A549 (cell line): ENCODE measurements at regions of chr5 and their contacts with region 1.

Region 1: DNA sequence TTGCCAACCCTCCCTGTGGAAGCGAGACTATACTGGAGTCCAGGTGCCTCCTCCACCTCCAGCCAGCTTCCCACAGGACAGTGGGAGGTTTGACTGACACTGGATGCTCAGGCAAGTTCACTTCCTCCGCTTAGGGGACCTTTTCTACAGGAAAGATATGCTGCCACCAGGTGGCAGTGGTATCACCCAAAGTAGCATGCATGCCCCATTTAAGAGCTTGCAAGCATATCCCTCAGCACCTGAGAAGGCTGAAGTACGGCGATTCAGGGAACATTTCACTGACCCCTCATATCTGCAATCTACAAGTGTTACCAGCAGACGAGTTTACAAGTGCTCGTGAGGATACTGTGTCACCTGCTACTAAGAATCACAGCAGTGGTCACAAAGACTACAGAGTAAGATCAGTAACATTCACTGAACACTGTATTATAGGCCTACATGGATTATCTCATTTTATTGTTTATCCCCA is 75.5 kb downstream of the KLHL3 start:
- DNase-seq: peak; percentile 65 to 84
- ATAC-seq: peak; percentile 99
- H3K4me3 ChIP-seq: no peak overlapping the region
- H3K27ac ChIP-seq: no peak overlapping the region
- H3K4me1 ChIP-seq: no peaks in the 10 kb centered on the region
- CTCF ChIP-seq: peak; percentile 86
- EP300 ChIP-seq: no peak
- POLR2A ChIP-seq: no peak
- RAD21 ChIP-seq: peak; percentile 69 to 74

Region 2: GRCh38 chr5:137594717-137595116 is 65.7 kb before region 1 on chr5:
- CTCF ChIA-PET with region 1: no interaction called
- POLR2A ChIA-PET with region 1: no interaction called
- DNase-seq: no peak
- ATAC-seq: no peak
- H3K4me3 ChIP-seq: no peak overlapping the region
- H3K27ac ChIP-seq: no peak overlapping the region
- H3K4me1 ChIP-seq: no peaks in the 10 kb centered on the region
- CTCF ChIP-seq: no peak
- EP300 ChIP-seq: no peak
- POLR2A ChIP-seq: no peak
- RAD21 ChIP-seq: no peak

Region 3: GRCh38 chr5:137629646-137630045 is 30.7 kb before region 1 on chr5:
- CTCF ChIA-PET with region 1: interaction called, 25 read pairs
- POLR2A ChIA-PET with region 1: no interaction called
- DNase-seq: peak; percentile 60 to 77
- ATAC-seq: peak; percentile 66 to 92
- H3K4me3 ChIP-seq: no peak overlapping the region
- H3K27ac ChIP-seq: no peak overlapping the region
- H3K4me1 ChIP-seq: no peaks in the 10 kb centered on the region
- CTCF ChIP-seq: peak; percentile 87
- EP300 ChIP-seq: no peak
- POLR2A ChIP-seq: no peak
- RAD21 ChIP-seq: peak; percentile 89 to 91

Region 4: GRCh38 chr5:137641148-137641547 is 19.2 kb before region 1 on chr5:
- CTCF ChIA-PET with region 1: interaction called, 17 read pairs
- POLR2A ChIA-PET with region 1: no interaction called
- DNase-seq: no peak
- ATAC-seq: no peak
- H3K4me3 ChIP-seq: no peak overlapping the region
- H3K27ac ChIP-seq: no peak overlapping the region
- H3K4me1 ChIP-seq: no peaks in the 10 kb centered on the region
- CTCF ChIP-seq: no peak
- EP300 ChIP-seq: no peak
- POLR2A ChIP-seq: no peak
- RAD21 ChIP-seq: no peak

Region 5: GRCh38 chr5:137672019-137672418 is 11.6 kb after region 1 on chr5:
- CTCF ChIA-PET with region 1: interaction called, 35 read pairs
- POLR2A ChIA-PET with region 1: no interaction called
- DNase-seq: no peak
- ATAC-seq: no peak
- H3K4me3 ChIP-seq: no peak overlapping the region
- H3K27ac ChIP-seq: no peak overlapping the region
- H3K4me1 ChIP-seq: peaks cover 6% of the 10 kb centered on the region; the same call in 1 of the 3 replicates
- CTCF ChIP-seq: no peak
- EP300 ChIP-seq: no peak
- POLR2A ChIP-seq: no peak
- RAD21 ChIP-seq: no peak

Region 6: GRCh38 chr5:137822158-137822764 is 161.9 kb after region 1 on chr5:
- CTCF ChIA-PET with region 1: interaction called, 15 read pairs
- POLR2A ChIA-PET with region 1: no interaction called
- DNase-seq: peak; percentile 69 to 73
- ATAC-seq: peak; percentile 92 to 95
- H3K4me3 ChIP-seq: no peak overlapping the region
- H3K27ac ChIP-seq: no peak overlapping the region
- H3K4me1 ChIP-seq: peaks cover 26% of the 10 kb centered on the region
- CTCF ChIP-seq: peak; percentile 74
- EP300 ChIP-seq: no peak
- POLR2A ChIP-seq: no peak
- RAD21 ChIP-seq: peak; percentile 84 to 94

Region 7: GRCh38 chr5:138170299-138170698 is 509.9 kb after region 1 on chr5:
- CTCF ChIA-PET with region 1: no interaction called
- POLR2A ChIA-PET with region 1: no interaction called
- DNase-seq: no peak
- ATAC-seq: no peak
- H3K4me3 ChIP-seq: no peak overlapping the region
- H3K27ac ChIP-seq: no peak overlapping the region
- H3K4me1 ChIP-seq: no peaks in the 10 kb centered on the region
- CTCF ChIP-seq: no peak
- EP300 ChIP-seq: no peak
- POLR2A ChIP-seq: no peak
- RAD21 ChIP-seq: no peak